Activated B cell treated with CpG ODN at 0.5 μM for 24 hours (primary cell): ENCODE measurements at regions of chr14 and their contacts with region 1.

Region 1: GRCh38 chr14:102086972-102087761 is at the start of gene HSP90AA1:
- DNase-seq: peak; percentile 95
- ATAC-seq: peak; percentile 69
- H3K4me3 Mint-ChIP-seq: peak within 1 kb of the TSS; percentile 93
- H3K27ac Mint-ChIP-seq: peak within 1 kb of the TSS; percentile 88
- H3K4me1 Mint-ChIP-seq: peaks cover 60% of the 10 kb centered on the region
- H3K27me3 Mint-ChIP-seq: no peaks in the 10 kb centered on the region
- CTCF ChIP-seq: no peak
- total RNA-seq, gene HSP90AA1: 431 and 435 TPM in 2 replicates

Region 2: DNA sequence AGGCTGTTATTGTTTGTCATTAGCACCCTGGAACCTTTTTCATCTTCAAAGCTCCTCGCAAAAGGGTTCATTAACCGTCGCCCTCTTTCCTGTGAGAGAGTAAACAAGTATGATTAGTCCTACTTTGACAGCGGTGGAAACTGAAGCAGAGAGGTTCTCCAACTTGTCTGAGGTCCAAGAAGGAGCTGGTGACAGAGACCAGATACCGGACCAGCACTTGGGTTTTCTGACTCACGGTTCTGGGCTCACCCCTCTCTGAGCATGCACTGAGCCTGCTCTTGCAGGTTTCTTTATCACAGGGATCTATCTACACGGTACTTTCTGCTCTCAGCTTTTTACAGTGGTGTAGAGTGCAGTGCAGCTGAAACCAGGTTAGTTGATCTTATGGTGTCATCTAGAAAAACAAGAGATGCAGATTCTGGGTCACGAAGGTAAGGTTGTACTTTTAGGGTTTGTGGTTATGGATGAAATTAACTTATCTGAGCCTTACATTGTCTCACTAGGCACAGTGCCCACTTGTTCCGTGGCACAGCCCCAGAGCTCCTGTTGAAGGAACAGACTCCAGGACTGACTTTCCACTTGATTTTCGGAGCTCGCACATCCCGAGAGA is 263.6 kb before region 1 on chr14:
- CTCF ChIA-PET with region 1: no interaction called
- POLR2A ChIA-PET with region 1: no interaction called
- intact Hi-C with region 1: loop called (anchors 5 kb)
- DNase-seq: no peak
- ATAC-seq: peak; percentile 31
- H3K4me3 Mint-ChIP-seq: peak overlapping the region; percentile 80
- H3K27ac Mint-ChIP-seq: peak overlapping the region; percentile 99
- H3K4me1 Mint-ChIP-seq: peaks cover 91% of the 10 kb centered on the region
- H3K27me3 Mint-ChIP-seq: no peaks in the 10 kb centered on the region
- CTCF ChIP-seq: no peak

Region 3: DNA sequence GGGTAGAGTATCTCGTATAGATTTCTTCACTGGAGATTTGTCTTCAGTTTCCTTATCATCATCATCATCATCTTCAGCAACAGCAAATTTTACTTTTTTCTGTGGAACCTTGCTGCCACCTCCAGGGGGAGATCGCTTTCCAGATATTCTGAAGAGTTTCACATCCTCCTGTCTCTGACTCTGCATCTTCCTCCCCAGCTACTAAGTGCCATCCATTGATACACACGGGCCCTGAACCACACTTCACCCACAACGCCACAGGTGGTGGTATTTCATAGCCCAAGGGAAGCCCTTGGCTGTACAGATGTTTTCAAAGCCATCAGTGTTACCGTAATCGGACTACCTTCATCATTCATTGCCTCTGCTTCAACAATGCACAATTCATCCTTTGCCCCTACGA is 243.5 kb before region 1 on chr14:
- CTCF ChIA-PET with region 1: no interaction called
- POLR2A ChIA-PET with region 1: interaction called, 3 read pairs
- intact Hi-C with region 1: loop called (anchors 10 kb)
- DNase-seq: peak; percentile 48
- ATAC-seq: peak; percentile 79
- H3K4me3 Mint-ChIP-seq: peak overlapping the region; percentile 76
- H3K27ac Mint-ChIP-seq: peak overlapping the region; percentile 94
- H3K4me1 Mint-ChIP-seq: peaks cover 83% of the 10 kb centered on the region
- H3K27me3 Mint-ChIP-seq: no peaks in the 10 kb centered on the region
- CTCF ChIP-seq: peak; percentile 26

Region 4: GRCh38 chr14:101947906-101948665 is 139.1 kb before region 1 on chr14:
- CTCF ChIA-PET with region 1: no interaction called
- POLR2A ChIA-PET with region 1: interaction called, 4 read pairs
- intact Hi-C with region 1: loop called (anchors 1 kb)
- DNase-seq: peak; percentile 98
- ATAC-seq: peak; percentile 95
- H3K4me3 Mint-ChIP-seq: peak overlapping the region; percentile 93
- H3K27ac Mint-ChIP-seq: peak overlapping the region; percentile 97
- H3K4me1 Mint-ChIP-seq: peaks cover 19% of the 10 kb centered on the region
- H3K27me3 Mint-ChIP-seq: peaks cover 22% of the 10 kb centered on the region
- CTCF ChIP-seq: no peak

Region 5: GRCh38 chr14:102125546-102125945 is 38.4 kb after region 1 on chr14:
- CTCF ChIA-PET with region 1: no interaction called
- POLR2A ChIA-PET with region 1: no interaction called
- intact Hi-C with region 1: no loop called
- DNase-seq: no peak
- ATAC-seq: no peak
- H3K4me3 Mint-ChIP-seq: no peak overlapping the region
- H3K27ac Mint-ChIP-seq: no peak overlapping the region
- H3K4me1 Mint-ChIP-seq: no peaks in the 10 kb centered on the region
- H3K27me3 Mint-ChIP-seq: no peaks in the 10 kb centered on the region
- CTCF ChIP-seq: no peak

Region 6: GRCh38 chr14:102139248-102140026 is 52.3 kb after region 1 on chr14 and contains the start of gene WDR20:
- CTCF ChIA-PET with region 1: no interaction called
- POLR2A ChIA-PET with region 1: interaction called, 6 read pairs
- intact Hi-C with region 1: loop called (anchors 1 kb)
- DNase-seq: peak; percentile 99
- ATAC-seq: peak; percentile 94
- H3K4me3 Mint-ChIP-seq: peak within 1 kb of the TSS; percentile 97
- H3K27ac Mint-ChIP-seq: peak within 1 kb of the TSS; percentile 93
- H3K4me1 Mint-ChIP-seq: peaks cover 19% of the 10 kb centered on the region
- H3K27me3 Mint-ChIP-seq: no peaks in the 10 kb centered on the region
- CTCF ChIP-seq: no peak
- total RNA-seq, gene WDR20: 41.1 and 42.3 TPM in 2 replicates

Region 7: GRCh38 chr14:102362545-102363181 is 275.5 kb after region 1 on chr14 and contains the starts of genes CINP and TECPR2:
- CTCF ChIA-PET with region 1: no interaction called
- POLR2A ChIA-PET with region 1: no interaction called
- intact Hi-C with region 1: loop called (anchors 1 kb)
- DNase-seq: peak; percentile 92
- ATAC-seq: peak; percentile 82
- H3K4me3 Mint-ChIP-seq: no peak within 1 kb of the TSS
- H3K27ac Mint-ChIP-seq: peak within 1 kb of the TSS; percentile 97
- H3K4me1 Mint-ChIP-seq: peaks cover 35% of the 10 kb centered on the region
- H3K27me3 Mint-ChIP-seq: no peaks in the 10 kb centered on the region
- CTCF ChIP-seq: no peak
- total RNA-seq, gene CINP: 48.6 and 57.5 TPM in 2 replicates
- total RNA-seq, gene TECPR2: 9.9 and 11.8 TPM in 2 replicates